Endothelial cell of umbilical vein (primary cell): ENCODE measurements at regions of chr4 and their contacts with region 1.

Region 1: GRCh38 chr4:78661921-78662521 is 110.5 kb downstream of the ANXA3 start:
- DNase-seq: peak; percentile 81
- H3K4me3 ChIP-seq: peak overlapping the region in 1 of 3 experiments; percentile 10
- H3K27ac ChIP-seq: peak overlapping the region; percentile 72
- H3K4me1 ChIP-seq: peaks cover 65% of the 10 kb centered on the region
- H3K27me3 ChIP-seq: no peaks in the 10 kb centered on the region
- CTCF ChIP-seq: no peak
- POLR2A ChIP-seq: no peak

Region 2: GRCh38 chr4:78650091-78651024 is 11.7 kb before region 1 on chr4:
- CTCF ChIA-PET with region 1: interaction called, 75 read pairs
- POLR2A ChIA-PET with region 1: interaction called, 6 read pairs
- dilution Hi-C with region 1: no loop called
- intact Hi-C with region 1: loop called (anchors 1 kb)
- DNase-seq: no peak
- H3K4me3 ChIP-seq: no peak overlapping the region
- H3K27ac ChIP-seq: no peak overlapping the region
- H3K4me1 ChIP-seq: peaks cover 47% of the 10 kb centered on the region
- H3K27me3 ChIP-seq: no peaks in the 10 kb centered on the region
- CTCF ChIP-seq: no peak
- POLR2A ChIP-seq: no peak

Region 3: GRCh38 chr4:78671903-78672815 is 10.1 kb after region 1 on chr4:
- CTCF ChIA-PET with region 1: interaction called, 11 read pairs
- POLR2A ChIA-PET with region 1: no interaction called
- dilution Hi-C with region 1: no loop called
- intact Hi-C with region 1: no loop called
- DNase-seq: no peak
- H3K4me3 ChIP-seq: no peak overlapping the region
- H3K27ac ChIP-seq: no peak overlapping the region
- H3K4me1 ChIP-seq: peaks cover 13% of the 10 kb centered on the region
- H3K27me3 ChIP-seq: no peaks in the 10 kb centered on the region
- CTCF ChIP-seq: no peak
- POLR2A ChIP-seq: no peak

Region 4: DNA sequence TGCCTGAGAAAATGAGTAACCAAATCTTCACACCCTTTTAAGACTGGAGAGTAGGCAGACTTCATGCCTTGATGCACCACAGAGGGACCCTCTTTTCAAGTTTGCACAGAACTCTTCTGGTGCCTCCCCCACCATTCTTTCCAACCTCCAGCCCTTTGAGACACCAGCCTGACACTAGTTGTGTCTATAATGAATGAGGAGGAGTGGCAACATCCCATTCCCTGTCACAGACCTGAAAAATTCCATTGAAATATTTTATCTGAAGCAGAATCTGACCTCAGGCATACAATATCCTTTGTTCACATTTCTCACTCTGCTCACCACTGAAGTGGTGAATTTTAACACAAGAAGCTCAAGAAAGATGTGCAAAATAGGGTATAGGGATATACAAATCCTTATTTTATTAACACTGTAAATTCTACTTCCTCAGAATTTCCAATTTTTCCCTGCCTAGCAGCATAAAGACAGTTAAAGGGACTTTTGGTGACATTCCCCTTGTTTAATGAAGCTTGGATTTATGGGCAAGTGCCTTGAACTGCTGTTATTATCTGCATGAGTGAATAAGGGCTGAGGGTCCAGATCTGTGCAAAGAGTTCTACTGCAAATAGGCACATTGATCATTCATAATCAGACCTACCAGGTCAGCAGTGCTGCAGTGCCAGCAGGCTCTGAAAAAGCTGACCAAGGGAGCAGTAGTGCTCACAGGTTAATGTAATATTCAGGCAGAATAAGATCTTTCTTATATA is 427.1 kb after region 1 on chr4:
- CTCF ChIA-PET with region 1: no interaction called
- POLR2A ChIA-PET with region 1: no interaction called
- dilution Hi-C with region 1: no loop called
- intact Hi-C with region 1: no loop called
- DNase-seq: no peak
- H3K4me3 ChIP-seq: no peak overlapping the region
- H3K27ac ChIP-seq: no peak overlapping the region
- H3K4me1 ChIP-seq: no peaks in the 10 kb centered on the region
- H3K27me3 ChIP-seq: no peaks in the 10 kb centered on the region
- CTCF ChIP-seq: no peak
- POLR2A ChIP-seq: no peak